ENCODE measurements at regions of chr6 and their contacts with region 1.

Region 1: GRCh38 chr6:83514866-83515466 is 2.6 kb downstream of the PRSS35 start:
- DNase-seq: peak; percentile 29
- ATAC-seq: peak; percentile 37; the same call in 1 of the 3 replicates
- H3K4me3 ChIP-seq: no peak overlapping the region
- H3K27ac ChIP-seq: no peak overlapping the region
- H3K4me1 ChIP-seq: 0 out of 2 replicates have a peak, but pooled peaks cover 14% of the 10 kb centered on the region
- H3K27me3 ChIP-seq: peaks cover 0 to 14% of the 10 kb centered on the region in 2 experiments; a peak in 2 of 5 replicates
- CTCF ChIP-seq: peak; percentile 76
- EP300 ChIP-seq: no peak
- POLR2A ChIP-seq: no peak
- RAD21 ChIP-seq: peak; percentile 45; the same call in 1 of the 2 replicates

Region 2: DNA sequence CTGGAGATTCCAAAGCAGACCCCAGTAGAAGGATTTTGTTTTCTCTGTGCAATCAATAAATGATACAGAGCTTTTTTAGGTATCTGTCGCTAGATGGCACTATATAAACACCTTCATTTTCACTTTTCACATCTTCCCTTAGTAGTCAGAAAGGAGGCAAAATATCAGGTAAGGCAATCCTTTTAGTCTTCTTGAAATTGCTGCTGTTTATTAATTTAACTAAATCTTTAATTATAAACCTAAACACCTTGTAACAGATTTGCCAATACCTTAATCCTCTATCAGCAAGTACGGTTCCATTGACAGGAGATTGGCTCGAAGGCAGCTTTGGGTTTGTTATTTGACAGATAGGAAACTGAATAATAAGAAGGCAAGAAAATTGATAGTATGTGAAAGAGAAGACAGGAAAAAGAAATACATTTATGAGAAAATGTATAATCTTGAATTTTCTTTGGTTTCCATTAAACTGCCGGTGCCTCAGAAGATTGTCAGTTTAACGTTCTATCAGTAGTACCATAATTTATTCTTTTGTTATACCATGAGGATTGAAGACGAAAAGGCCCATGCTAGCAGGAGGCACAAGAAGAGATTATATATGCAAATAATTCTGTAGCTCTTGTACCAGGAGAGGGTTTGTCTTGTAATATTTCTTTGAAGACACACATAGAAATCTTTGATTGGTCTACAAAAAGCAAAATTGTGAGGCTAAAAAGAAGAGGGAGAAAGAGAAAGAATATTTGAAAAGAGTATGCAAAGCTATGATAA is 1243.9 kb before region 1 on chr6:
- CTCF ChIA-PET with region 1: no interaction called
- POLR2A ChIA-PET with region 1: no interaction called
- in situ Hi-C with region 1: loop called (anchors 25 kb)
- intact Hi-C with region 1: no loop called
- DNase-seq: peak; percentile 30
- ATAC-seq: no peak; the same call in 2 of the 3 replicates
- H3K4me3 ChIP-seq: no peak overlapping the region
- H3K27ac ChIP-seq: no peak overlapping the region
- H3K4me1 ChIP-seq: no peaks in the 10 kb centered on the region
- H3K27me3 ChIP-seq: peaks cover 0 to 6% of the 10 kb centered on the region in 2 experiments; a peak in 1 of 5 replicates
- CTCF ChIP-seq: peak; percentile 62
- EP300 ChIP-seq: no peak
- POLR2A ChIP-seq: no peak
- RAD21 ChIP-seq: no peak

Region 3: DNA sequence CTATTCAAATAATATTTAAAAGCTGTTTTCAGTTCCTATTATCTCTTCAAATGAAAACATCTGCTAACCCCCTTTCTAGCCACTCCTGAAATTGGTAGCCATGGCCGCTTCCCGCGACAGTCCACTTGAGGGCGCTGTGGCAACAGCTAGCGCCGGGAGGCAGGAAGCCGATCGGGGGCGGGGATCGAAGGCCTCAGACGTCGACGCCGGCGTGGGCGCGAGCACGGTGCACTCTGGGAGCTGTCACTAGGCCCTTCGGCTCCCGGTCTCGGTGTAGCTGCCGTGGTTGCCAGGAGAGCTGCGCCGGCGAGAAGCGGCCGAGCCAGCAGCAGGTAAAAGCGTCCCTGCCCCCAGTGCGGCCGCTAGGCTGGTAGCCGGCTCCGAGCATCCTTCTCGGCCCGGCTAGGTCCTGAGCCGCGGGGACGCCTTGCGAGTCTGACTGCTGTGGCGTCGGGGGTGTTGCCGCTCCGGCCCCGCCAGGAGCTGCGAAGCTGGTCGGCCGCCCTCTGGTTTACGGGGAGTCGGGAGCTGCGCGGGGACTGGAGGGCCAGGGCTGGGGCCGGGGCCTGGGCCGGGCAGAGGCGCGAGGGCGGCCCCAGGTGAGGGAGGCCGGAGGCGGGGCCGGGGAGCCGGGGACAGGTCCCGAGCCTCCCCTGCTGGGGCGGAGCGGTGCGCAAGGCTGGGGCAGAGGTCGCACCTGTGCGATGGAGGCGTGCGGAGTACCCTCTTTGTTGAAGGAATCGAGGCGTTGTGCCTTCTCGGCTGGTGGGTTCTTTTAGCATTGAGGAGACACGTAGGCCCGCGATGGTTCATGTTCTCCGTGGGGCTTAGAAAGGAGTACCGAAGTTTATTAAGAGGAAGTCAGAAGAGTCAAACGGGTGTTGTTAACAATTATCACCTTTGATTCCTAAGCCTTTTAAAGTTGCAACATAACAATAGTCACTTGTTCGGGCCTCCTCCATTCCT is 447.2 kb before region 1 on chr6 and contains the start of gene DOP1A:
- CTCF ChIA-PET with region 1: no interaction called
- POLR2A ChIA-PET with region 1: no interaction called
- in situ Hi-C with region 1: loop called (anchors 5 kb)
- intact Hi-C with region 1: loop called (anchors 5 kb)
- DNase-seq: peak; percentile 86
- ATAC-seq: peak; percentile 91
- H3K4me3 ChIP-seq: peak within 1 kb of the TSS; percentile 79 to 87 (median 86)
- H3K27ac ChIP-seq: peak within 1 kb of the TSS; percentile 85
- H3K4me1 ChIP-seq: peaks cover 30% of the 10 kb centered on the region
- H3K27me3 ChIP-seq: no peaks in the 10 kb centered on the region; a peak in 1 of 5 replicates
- CTCF ChIP-seq: peak; percentile 97
- EP300 ChIP-seq: no peak
- POLR2A ChIP-seq: peak; percentile 67 to 76
- RAD21 ChIP-seq: peak; percentile 89
- total RNA-seq, gene DOP1A: 16.7 and 18.9 TPM in 2 replicates

Region 4: GRCh38 chr6:83215131-83216047 is 299.6 kb before region 1 on chr6:
- CTCF ChIA-PET with region 1: interaction called, 12 read pairs
- POLR2A ChIA-PET with region 1: no interaction called
- in situ Hi-C with region 1: loop called (anchors 5 kb)
- intact Hi-C with region 1: loop called (anchors 2 kb)
- DNase-seq: peak; percentile 66
- ATAC-seq: peak; percentile 99
- H3K4me3 ChIP-seq: no peak overlapping the region
- H3K27ac ChIP-seq: no peak overlapping the region
- H3K4me1 ChIP-seq: no peaks in the 10 kb centered on the region
- H3K27me3 ChIP-seq: no peaks in the 10 kb centered on the region; a peak in 1 of 5 replicates
- CTCF ChIP-seq: peak; percentile 89
- EP300 ChIP-seq: no peak
- POLR2A ChIP-seq: no peak
- RAD21 ChIP-seq: peak; percentile 69; the same call in 1 of the 2 replicates

Region 5: GRCh38 chr6:83221889-83222479 is 293.0 kb before region 1 on chr6:
- CTCF ChIA-PET with region 1: interaction called, 14 read pairs
- POLR2A ChIA-PET with region 1: no interaction called
- in situ Hi-C with region 1: loop called (anchors 5 kb)
- intact Hi-C with region 1: loop called (anchors 1 kb)
- DNase-seq: peak; percentile 34
- ATAC-seq: no peak
- H3K4me3 ChIP-seq: no peak overlapping the region
- H3K27ac ChIP-seq: no peak overlapping the region
- H3K4me1 ChIP-seq: no peaks in the 10 kb centered on the region
- H3K27me3 ChIP-seq: no peaks in the 10 kb centered on the region; a peak in 1 of 5 replicates
- CTCF ChIP-seq: peak; percentile 50
- EP300 ChIP-seq: no peak
- POLR2A ChIP-seq: no peak
- RAD21 ChIP-seq: 0 out of 2 replicates have a peak, but pooled peaks have one; percentile 19

Region 6: GRCh38 chr6:83417880-83418663 is 96.9 kb before region 1 on chr6:
- CTCF ChIA-PET with region 1: interaction called, 18 read pairs
- POLR2A ChIA-PET with region 1: no interaction called
- in situ Hi-C with region 1: loop called (anchors 5 kb)
- intact Hi-C with region 1: loop called (anchors 1 kb)
- DNase-seq: peak; percentile 27
- ATAC-seq: peak; percentile 74
- H3K4me3 ChIP-seq: no peak overlapping the region
- H3K27ac ChIP-seq: no peak overlapping the region
- H3K4me1 ChIP-seq: no peaks in the 10 kb centered on the region
- H3K27me3 ChIP-seq: no peaks in the 10 kb centered on the region
- CTCF ChIP-seq: peak; percentile 54
- EP300 ChIP-seq: no peak
- POLR2A ChIP-seq: no peak
- RAD21 ChIP-seq: 0 out of 2 replicates have a peak, but pooled peaks have one; percentile 33

Region 7: DNA sequence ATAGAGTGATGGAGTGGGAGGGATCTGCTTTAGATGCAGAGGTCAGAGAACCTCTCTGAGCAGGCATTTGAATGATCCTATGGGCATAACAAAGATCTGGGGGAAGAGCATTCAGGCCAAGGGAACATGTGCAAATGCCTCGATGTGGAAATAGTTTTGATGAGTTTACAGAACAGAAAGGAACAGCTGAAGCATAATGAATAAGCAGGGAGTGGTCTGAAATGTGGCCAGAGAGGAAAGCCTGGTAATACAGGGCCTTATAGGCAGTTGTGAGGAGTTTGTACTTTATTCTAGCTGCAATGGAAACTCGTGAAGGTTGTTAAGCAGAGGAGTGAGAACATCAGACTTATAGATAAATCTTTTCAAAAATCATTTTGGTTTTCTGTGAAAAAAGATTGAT is 51.1 kb before region 1 on chr6:
- CTCF ChIA-PET with region 1: no interaction called
- POLR2A ChIA-PET with region 1: no interaction called
- in situ Hi-C with region 1: no loop called
- intact Hi-C with region 1: no loop called
- DNase-seq: no peak
- ATAC-seq: no peak
- H3K4me3 ChIP-seq: no peak overlapping the region
- H3K27ac ChIP-seq: no peak overlapping the region
- H3K4me1 ChIP-seq: no peaks in the 10 kb centered on the region
- H3K27me3 ChIP-seq: no peaks in the 10 kb centered on the region
- CTCF ChIP-seq: no peak
- EP300 ChIP-seq: no peak
- POLR2A ChIP-seq: no peak
- RAD21 ChIP-seq: no peak